HEK293 (cell line): ENCODE measurements at regions of chr3 and their contacts with region 1.

Region 1: GRCh38 chr3:69161587-69162307 is 39.4 kb upstream of the LMOD3 start:
- H3K4me3 ChIP-seq: no peak overlapping the region
- H3K27ac ChIP-seq: no peak overlapping the region
- H3K4me1 ChIP-seq: no peaks in the 10 kb centered on the region
- CTCF ChIP-seq: peak; percentile 49

Region 2: DNA sequence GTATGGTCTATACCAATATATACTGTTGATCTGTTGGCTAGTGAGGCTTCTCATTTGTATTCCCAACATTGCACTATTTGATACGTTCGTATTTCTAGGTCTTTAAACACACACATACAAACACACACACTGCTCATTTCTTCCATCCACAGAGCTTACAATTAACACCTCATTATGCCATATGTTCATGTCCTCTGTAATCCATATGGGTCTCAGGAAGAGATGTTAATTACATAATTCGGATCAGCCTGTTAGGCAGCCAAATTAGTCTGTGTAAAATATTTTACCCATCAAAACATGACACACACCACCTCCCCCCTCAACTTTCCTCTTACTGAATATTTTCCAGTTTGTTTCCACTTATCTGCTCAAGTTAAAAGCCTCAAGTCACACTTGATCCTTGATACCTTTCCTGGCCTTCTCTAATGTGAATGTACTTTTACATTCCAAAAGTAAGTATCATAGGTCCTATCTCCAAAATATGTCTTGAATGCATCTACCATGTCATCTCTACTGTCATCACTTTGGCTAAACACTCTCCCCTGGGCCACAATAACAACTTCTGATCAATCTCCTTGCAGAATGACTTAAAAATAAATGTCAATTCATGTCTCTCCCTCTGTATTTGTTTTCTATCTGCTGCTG is 176.5 kb before region 1 on chr3:
- CTCF ChIA-PET with region 1: no interaction called
- POLR2A ChIA-PET with region 1: no interaction called
- H3K4me3 ChIP-seq: no peak overlapping the region
- H3K27ac ChIP-seq: no peak overlapping the region
- H3K4me1 ChIP-seq: no peaks in the 10 kb centered on the region
- CTCF ChIP-seq: no peak

Region 3: DNA sequence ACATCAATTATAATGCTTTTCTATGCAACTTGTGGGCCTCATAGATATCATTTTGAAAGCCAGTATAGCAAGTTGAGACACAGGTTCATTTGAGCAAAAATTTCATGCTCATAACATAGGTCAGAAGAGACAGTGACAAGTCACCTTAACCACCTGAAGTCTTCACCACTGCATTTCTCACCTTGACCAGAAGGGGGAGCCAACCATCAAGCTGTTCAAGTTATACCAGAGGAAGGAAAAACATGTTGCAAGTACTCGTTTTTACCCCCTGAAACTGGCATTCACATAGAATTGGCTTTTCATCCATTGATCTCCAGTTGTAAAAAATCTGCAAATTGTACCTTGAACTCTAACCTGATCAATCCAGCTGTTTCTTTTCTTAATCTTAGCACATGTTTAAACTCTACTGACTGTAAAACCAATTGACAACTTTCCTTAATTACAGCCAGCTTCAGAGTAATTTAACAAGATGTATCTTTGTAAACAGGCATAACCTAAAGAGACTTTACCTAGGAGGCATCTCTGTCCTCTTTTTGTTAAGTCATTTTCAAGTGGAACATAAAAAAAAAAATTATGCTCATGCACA is 40.8 kb before region 1 on chr3:
- CTCF ChIA-PET with region 1: interaction called, 31 read pairs
- POLR2A ChIA-PET with region 1: no interaction called
- H3K4me3 ChIP-seq: no peak overlapping the region
- H3K27ac ChIP-seq: no peak overlapping the region
- H3K4me1 ChIP-seq: no peaks in the 10 kb centered on the region
- CTCF ChIP-seq: peak; percentile 58; the same call in 1 of the 2 replicates

Region 4: DNA sequence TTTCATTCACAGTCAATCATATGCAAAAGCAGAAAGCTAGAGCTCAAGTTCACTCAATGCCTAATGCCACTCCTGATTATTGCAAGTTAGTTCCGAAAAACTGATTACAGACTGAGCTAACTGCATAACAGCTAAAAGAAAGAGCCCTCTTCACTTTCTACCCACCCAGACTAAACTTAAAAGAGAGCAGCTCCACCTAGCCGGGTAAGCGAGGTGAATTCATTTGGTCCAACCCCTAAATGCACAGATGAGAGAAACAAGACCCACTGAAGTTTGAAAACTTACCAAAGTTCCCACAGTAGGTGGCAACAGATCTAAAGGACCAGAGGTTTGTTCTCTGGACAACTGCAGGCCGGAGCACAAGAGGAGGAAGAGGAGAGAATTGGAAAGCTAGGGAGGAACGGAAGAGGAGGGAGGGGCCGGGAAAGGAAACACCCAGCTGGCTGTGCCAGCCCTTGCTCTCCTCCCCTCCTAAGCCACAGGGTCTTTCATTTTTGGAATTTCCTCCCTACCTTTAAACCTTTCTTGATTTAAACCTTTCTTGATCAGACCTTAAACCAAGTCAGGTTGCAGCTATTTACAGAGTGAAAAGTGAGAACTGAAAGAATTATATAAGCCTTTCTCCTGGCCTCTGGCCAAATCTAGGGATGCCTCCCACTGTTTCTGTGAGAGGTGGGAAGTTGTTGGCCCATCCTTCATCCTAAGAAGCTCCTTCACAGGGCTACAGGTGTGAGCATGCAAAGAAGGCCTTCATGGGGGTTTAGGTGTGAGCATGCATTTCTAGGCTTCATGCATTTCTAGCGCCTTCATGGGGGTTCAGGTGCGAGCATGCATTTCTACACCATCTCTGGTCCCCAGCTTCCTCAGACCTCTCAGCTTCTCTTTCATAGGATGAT is 75.3 kb after region 1 on chr3:
- CTCF ChIA-PET with region 1: interaction called, 11 read pairs
- POLR2A ChIA-PET with region 1: no interaction called
- H3K4me3 ChIP-seq: peak overlapping the region; percentile 21
- H3K27ac ChIP-seq: no peak overlapping the region; the same call in 1 of the 2 replicates
- H3K4me1 ChIP-seq: no peaks in the 10 kb centered on the region
- CTCF ChIP-seq: peak; percentile 41; the same call in 1 of the 2 replicates

Region 5: GRCh38 chr3:69306239-69307185 is 144.8 kb after region 1 on chr3:
- CTCF ChIA-PET with region 1: interaction called, 173 read pairs
- POLR2A ChIA-PET with region 1: interaction called, 3 read pairs
- H3K4me3 ChIP-seq: no peak overlapping the region
- H3K27ac ChIP-seq: no peak overlapping the region
- H3K4me1 ChIP-seq: no peaks in the 10 kb centered on the region
- CTCF ChIP-seq: peak; percentile 77

Region 6: GRCh38 chr3:69425261-69425660 is 263.5 kb after region 1 on chr3:
- CTCF ChIA-PET with region 1: interaction called, 32 read pairs
- POLR2A ChIA-PET with region 1: interaction called, 3 read pairs
- H3K4me3 ChIP-seq: no peak overlapping the region
- H3K27ac ChIP-seq: no peak overlapping the region
- H3K4me1 ChIP-seq: no peaks in the 10 kb centered on the region
- CTCF ChIP-seq: peak; percentile 26; the same call in 1 of the 2 replicates